ENCODE measurements at regions of chr5 and their contacts with region 1.

Region 1: DNA sequence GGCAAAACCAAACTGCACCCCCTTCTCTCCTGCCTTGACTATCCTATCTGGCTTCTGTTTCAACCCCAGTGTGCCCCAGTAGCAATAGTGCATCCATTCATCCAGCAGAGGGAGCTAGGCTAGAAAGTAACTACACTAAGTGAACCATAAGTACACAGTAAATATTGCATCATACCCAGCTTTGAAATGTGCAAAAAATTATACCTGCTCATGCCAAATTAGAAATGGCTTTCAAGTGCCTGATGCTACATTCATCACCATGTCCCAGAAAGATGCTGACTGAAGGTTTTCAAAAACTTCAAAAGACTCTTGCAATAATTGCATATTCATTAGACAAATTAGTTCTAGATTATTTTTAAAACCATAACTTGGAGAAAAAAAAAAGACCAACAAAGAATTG is 153.5 kb downstream of the PRELID2 start:
- DNase-seq: peak; percentile 45 to 77 (median 62)
- H3K4me3 ChIP-seq: no peak overlapping the region
- H3K27ac ChIP-seq: no peak overlapping the region
- H3K4me1 ChIP-seq: no peaks in the 10 kb centered on the region
- H3K27me3 ChIP-seq: no peaks in the 10 kb centered on the region
- CTCF ChIP-seq: peak; percentile 62 to 84 (median 72)
- POLR2A ChIP-seq: no peak

Region 2: DNA sequence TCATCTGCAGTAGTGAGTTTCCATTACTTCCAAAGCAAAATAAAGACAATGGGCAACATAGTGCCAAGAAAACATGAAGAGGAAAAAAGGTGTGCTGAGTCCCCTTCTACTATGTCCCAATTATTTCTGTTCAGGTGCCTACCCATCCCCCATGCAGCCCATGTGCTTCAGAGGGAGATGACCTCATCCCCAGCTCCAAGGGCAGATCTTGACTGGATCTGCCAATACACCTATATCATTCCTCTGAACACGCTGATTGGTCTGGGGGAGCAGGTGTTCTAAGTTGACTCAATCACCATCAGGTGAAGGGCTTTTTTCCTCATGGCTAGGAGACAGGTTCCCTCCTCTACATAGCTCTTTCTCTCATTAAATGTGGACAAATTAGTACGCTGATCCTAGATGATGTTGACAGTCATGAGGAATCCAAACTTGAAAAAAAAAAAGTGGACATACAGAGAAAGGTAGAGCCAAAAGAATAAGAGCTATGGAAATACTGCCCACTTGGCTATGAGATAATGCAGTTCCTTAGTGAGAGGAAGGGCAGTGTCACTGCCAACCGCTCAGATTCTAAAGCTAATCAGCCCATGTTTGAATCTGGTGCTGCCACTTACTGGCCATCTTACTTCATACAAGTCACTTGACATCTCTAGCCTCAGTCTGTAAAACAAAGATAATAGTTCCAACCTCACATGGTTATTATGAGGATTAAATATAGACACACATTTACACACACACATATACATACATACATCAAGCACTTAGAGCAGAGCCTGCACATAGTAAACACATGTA is 130.3 kb after region 1 on chr5:
- intact Hi-C with region 1: loop called in 1 of 2 experiments (anchors 5 kb)
- DNase-seq: peak; percentile 24 to 74 (median 32)
- H3K4me3 ChIP-seq: no peak overlapping the region
- H3K27ac ChIP-seq: no peak overlapping the region
- H3K4me1 ChIP-seq: no peaks in the 10 kb centered on the region
- H3K27me3 ChIP-seq: no peaks in the 10 kb centered on the region
- CTCF ChIP-seq: peak in 5 of 6 experiments; percentile 20 to 57 (median 45)
- POLR2A ChIP-seq: no peak

Region 3: GRCh38 chr5:145825751-145826180 is 144.1 kb after region 1 on chr5:
- intact Hi-C with region 1: loop called in 1 of 2 experiments (anchors 5 kb)
- DNase-seq: peak in 1 of 7 donors; percentile 9
- H3K4me3 ChIP-seq: no peak overlapping the region
- H3K27ac ChIP-seq: no peak overlapping the region
- H3K4me1 ChIP-seq: peaks cover 0 to 13% of the 10 kb centered on the region in 2 donors
- H3K27me3 ChIP-seq: no peaks in the 10 kb centered on the region
- CTCF ChIP-seq: peak; percentile 67 to 92 (median 82)
- POLR2A ChIP-seq: no peak

Region 4: DNA sequence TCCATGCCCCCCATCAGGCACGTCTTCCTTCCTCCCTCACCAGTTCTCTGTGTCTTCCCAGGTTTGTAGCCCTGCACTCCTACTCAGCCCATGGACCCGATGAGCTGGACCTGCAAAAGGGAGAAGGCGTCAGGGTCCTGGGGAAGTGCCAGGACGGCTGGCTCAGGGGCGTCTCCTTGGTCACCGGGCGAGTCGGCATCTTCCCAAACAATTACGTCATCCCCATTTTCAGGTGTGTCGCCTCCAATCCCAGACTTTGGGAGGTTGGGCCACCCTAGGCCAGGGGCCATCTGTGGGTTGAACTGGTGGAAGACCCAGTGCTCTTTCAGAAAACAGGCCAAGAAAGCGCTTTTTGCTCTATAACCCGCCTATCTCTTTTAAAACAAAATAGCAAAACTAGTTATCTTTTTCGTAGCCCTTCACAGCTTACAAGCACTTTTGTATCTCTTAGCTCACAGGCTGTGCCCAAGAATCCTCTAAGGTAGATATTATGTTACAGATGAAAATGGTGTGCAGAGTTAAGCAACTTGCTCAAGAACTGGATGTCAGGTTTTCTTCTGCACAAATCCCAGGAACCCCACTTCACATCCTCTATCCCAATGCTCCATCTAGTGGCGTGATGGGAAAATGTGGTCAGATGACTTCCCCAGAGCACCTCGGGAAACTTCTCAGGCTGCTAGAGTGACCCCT is 367.5 kb after region 1 on chr5:
- intact Hi-C with region 1: loop called (anchors 10 kb)
- DNase-seq: peak; percentile 36 to 73 (median 52)
- H3K4me3 ChIP-seq: no peak overlapping the region
- H3K27ac ChIP-seq: no peak overlapping the region
- H3K4me1 ChIP-seq: no peaks in the 10 kb centered on the region
- H3K27me3 ChIP-seq: no peaks in the 10 kb centered on the region
- CTCF ChIP-seq: peak; percentile 39 to 69 (median 64)
- POLR2A ChIP-seq: no peak

Measured in adrenal gland (tissue), 19 donors.